ENCODE measurements at regions of chr2 and their contacts with region 1.

Region 1: GRCh38 chr2:195486987-195487644 is 169.9 kb upstream of the SLC39A10 start:
- DNase-seq: peak; percentile 30
- H3K4me3 Mint-ChIP-seq: peak overlapping the region; percentile 38
- H3K27ac Mint-ChIP-seq: peak overlapping the region; percentile 84
- H3K4me1 Mint-ChIP-seq: peaks cover 35% of the 10 kb centered on the region
- H3K27me3 Mint-ChIP-seq: no peaks in the 10 kb centered on the region

Region 2: DNA sequence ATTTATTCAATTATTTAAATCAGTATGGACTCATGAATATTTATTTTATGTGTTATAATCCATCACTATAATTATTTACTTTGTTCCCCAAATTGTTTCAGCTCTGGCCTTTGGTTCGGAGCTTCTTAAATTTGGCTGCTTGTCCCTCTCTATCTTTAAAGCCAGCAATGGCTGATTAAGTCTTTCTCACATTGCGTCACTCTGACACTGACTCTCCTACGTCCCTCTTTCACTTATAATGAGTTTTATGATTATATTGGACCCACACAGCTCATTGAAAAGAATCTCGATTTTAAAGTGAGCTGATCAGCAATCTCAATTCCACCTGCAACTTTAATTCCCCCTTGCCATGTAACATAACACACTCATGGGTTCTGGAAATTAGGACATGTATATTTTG is 15.3 kb before region 1 on chr2:
- CTCF ChIA-PET with region 1: no interaction called
- POLR2A ChIA-PET with region 1: no interaction called
- DNase-seq: no peak
- H3K4me3 Mint-ChIP-seq: no peak overlapping the region
- H3K27ac Mint-ChIP-seq: no peak overlapping the region
- H3K4me1 Mint-ChIP-seq: peaks cover 6% of the 10 kb centered on the region
- H3K27me3 Mint-ChIP-seq: no peaks in the 10 kb centered on the region

Region 3: GRCh38 chr2:195543902-195544894 is 57.1 kb after region 1 on chr2:
- CTCF ChIA-PET with region 1: no interaction called
- POLR2A ChIA-PET with region 1: interaction called, 22 read pairs
- DNase-seq: no peak
- H3K4me3 Mint-ChIP-seq: peak overlapping the region; percentile 6
- H3K27ac Mint-ChIP-seq: peak overlapping the region; percentile 87
- H3K4me1 Mint-ChIP-seq: peaks cover 75% of the 10 kb centered on the region
- H3K27me3 Mint-ChIP-seq: no peaks in the 10 kb centered on the region

Region 4: DNA sequence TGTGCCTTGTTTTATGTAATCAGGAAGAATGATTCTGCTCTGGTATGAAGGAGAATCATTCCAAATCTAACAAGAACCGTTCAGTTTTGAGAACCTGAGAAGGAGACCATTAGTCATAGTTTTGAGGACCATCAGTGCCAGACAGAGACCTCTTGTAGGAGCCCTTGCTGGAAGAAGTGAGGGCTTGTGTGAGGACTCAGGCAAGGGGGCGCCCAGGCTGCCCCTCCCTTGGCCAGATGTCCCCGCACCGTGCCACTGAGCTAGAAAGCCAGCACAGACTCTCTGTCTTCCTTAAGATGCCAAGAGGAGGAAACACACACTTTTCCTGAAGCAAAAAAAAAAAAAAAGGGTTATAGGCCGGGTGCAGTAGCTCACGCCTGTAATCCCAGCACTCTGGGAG is 114.2 kb after region 1 on chr2:
- CTCF ChIA-PET with region 1: no interaction called
- POLR2A ChIA-PET with region 1: no interaction called
- DNase-seq: no peak
- H3K4me3 Mint-ChIP-seq: no peak overlapping the region
- H3K27ac Mint-ChIP-seq: no peak overlapping the region
- H3K4me1 Mint-ChIP-seq: no peaks in the 10 kb centered on the region
- H3K27me3 Mint-ChIP-seq: no peaks in the 10 kb centered on the region

Measured in activated CD4-positive, alpha-beta memory T cell treated with anti-CD3 and anti-CD28 coated beads, Interleukin-2, amount 10 ng/mL, durations not matched to agents 7 days and 5 days (primary cell).